PC-3 (cell line): ENCODE measurements at regions of chr6 and their contacts with region 1.

Region 1: GRCh38 chr6:34248727-34249551 is at the start of gene SMIM29:
- DNase-seq: peak; percentile 96
- ATAC-seq: peak; percentile 45
- H3K4me3 ChIP-seq: peak within 1 kb of the TSS; percentile 79
- H3K27ac ChIP-seq: peak within 1 kb of the TSS; percentile 60
- H3K4me1 ChIP-seq: peaks cover 54% of the 10 kb centered on the region
- H3K27me3 ChIP-seq: no peaks in the 10 kb centered on the region
- CTCF ChIP-seq: peak; percentile 77
- total RNA-seq, gene SMIM29: 25.8 and 26.8 TPM in 2 replicates

Region 2: GRCh38 chr6:34154668-34155447 is 94.1 kb before region 1 on chr6:
- CTCF ChIA-PET with region 1: no interaction called
- POLR2A ChIA-PET with region 1: interaction called, 31 read pairs
- intact Hi-C with region 1: no loop called
- DNase-seq: peak; percentile 52
- ATAC-seq: peak; percentile 78
- H3K4me3 ChIP-seq: peak overlapping the region; percentile 45
- H3K27ac ChIP-seq: no peak overlapping the region
- H3K4me1 ChIP-seq: peaks cover 3% of the 10 kb centered on the region; the same call in 1 of the 2 replicates
- H3K27me3 ChIP-seq: peaks cover 22% of the 10 kb centered on the region
- CTCF ChIP-seq: peak; percentile 94

Region 3: DNA sequence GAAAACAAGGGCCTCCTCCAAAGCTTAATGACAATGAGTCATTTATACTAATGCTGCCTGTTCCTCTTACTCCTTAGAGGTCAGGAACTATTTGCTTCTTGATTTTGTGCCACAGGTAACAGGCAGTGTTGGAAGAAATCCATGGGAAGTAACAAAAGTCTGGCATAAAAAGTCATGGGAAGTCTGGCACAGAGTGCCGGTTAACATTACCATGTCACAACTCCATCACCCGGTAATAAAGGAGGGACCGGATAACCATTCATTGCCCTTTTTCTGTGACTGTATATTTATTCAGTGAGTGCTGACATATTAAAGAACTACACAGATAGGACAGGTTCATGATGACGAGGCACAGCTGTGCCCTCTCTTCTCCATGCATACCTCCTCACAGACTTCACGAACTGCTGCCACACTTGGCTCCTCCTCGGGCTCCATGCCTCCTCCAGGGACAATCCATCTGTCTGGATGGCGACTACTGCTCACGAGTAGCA is 92.6 kb after region 1 on chr6:
- CTCF ChIA-PET with region 1: no interaction called
- POLR2A ChIA-PET with region 1: no interaction called
- intact Hi-C with region 1: loop called (anchors 2 kb)
- DNase-seq: peak; percentile 96
- ATAC-seq: peak; percentile 97
- H3K4me3 ChIP-seq: peak overlapping the region; percentile 36; the same call in 1 of the 2 replicates
- H3K27ac ChIP-seq: peak overlapping the region; percentile 72
- H3K4me1 ChIP-seq: peaks cover 46% of the 10 kb centered on the region
- H3K27me3 ChIP-seq: no peaks in the 10 kb centered on the region
- CTCF ChIP-seq: no peak

Region 4: GRCh38 chr6:34414999-34415858 is 166.3 kb after region 1 on chr6:
- CTCF ChIA-PET with region 1: interaction called, 34 read pairs
- POLR2A ChIA-PET with region 1: interaction called, 4 read pairs
- intact Hi-C with region 1: loop called (anchors 1 kb)
- DNase-seq: peak; percentile 72
- ATAC-seq: peak; percentile 57
- H3K4me3 ChIP-seq: no peak overlapping the region
- H3K27ac ChIP-seq: no peak overlapping the region
- H3K4me1 ChIP-seq: peaks cover 14% of the 10 kb centered on the region
- H3K27me3 ChIP-seq: no peaks in the 10 kb centered on the region
- CTCF ChIP-seq: peak; percentile 80

Region 5: DNA sequence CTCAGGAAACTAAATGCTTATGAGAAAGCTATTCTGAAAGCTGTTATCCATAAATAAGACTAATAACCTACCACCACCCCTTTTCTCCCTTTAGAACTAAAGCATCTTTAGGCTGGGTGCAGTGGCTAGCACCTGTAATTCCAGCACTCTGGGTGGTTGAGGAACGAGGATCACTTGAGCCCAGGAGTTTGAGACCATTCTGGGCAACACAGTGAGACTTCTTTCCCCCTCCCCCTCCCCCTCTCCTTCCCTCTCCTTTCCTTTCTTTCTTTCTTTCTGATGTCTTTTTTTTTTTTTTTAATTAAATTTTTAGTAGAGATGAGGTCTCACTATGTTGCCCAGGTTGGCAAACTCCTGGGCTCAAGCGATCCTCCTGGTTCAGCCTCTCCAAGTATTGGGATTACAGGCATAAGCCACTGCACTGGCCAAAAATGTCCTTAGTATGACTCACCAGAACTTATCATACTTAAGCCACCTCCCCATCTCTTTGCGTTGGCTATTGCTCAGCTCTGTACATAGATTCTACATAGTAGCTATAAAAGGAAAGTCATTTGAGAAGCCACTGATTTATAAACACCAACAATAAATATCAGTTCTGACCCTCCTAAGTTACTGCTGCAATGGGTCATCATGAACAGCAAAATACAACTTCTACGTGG is 362.0 kb after region 1 on chr6:
- CTCF ChIA-PET with region 1: no interaction called
- POLR2A ChIA-PET with region 1: no interaction called
- intact Hi-C with region 1: loop called (anchors 5 kb)
- DNase-seq: peak; percentile 94
- ATAC-seq: peak; percentile 93
- H3K4me3 ChIP-seq: peak overlapping the region; percentile 6; the same call in 1 of the 2 replicates
- H3K27ac ChIP-seq: peak overlapping the region; percentile 31
- H3K4me1 ChIP-seq: peaks cover 17% of the 10 kb centered on the region
- H3K27me3 ChIP-seq: no peaks in the 10 kb centered on the region
- CTCF ChIP-seq: no peak